Caco-2 (cell line): ENCODE measurements at regions of chr11 and their contacts with region 1.

Region 1: DNA sequence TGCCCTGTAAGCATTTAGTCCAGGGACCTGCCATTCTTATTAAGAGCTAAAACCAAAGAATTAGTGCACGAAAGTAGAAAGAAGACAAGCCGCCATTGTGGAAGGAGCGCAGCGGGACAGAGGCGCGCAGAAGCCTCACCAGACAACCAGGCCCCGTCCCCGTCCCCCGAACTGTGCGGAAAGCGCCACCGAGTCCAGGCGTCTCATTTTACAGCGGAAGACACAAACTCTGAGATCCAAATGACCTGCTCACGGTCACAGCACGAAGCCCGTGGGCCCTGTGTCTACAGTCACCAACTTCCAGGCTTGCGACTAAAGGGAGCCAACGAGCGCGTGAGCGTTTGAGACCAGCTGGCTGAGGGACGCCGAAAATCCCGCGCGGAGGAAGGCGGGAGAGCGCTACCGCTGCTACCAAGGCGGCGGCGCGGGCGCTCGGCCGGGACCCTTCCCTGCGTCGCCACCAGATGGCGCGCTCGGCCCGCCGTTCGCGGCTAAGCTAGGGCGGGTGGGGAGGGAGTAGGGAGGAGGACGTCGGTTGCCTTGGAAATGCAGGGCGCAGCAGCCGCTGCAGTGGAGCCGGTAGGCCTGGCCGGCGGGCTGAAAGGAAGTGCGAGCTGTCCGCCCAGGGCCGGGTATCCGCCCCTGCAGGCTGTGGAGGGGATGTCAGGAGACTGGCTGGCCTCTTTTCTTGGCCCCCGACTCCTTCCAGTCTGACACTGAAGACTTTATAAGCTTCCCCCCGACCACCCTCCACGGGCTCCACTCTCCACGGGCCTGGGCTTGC is 434 bp upstream of the CCDC83 start:
- DNase-seq: peak; percentile 97 to 99
- H3K4me3 ChIP-seq: peak overlapping the region; percentile 75
- H3K4me3 Mint-ChIP-seq: peak overlapping the region; percentile 83
- H3K27ac Mint-ChIP-seq: peak overlapping the region; percentile 87
- H3K4me1 ChIP-seq: peaks cover 5% of the 10 kb centered on the region
- H3K4me1 Mint-ChIP-seq: peaks cover 16% of the 10 kb centered on the region
- H3K27me3 ChIP-seq: no peaks in the 10 kb centered on the region
- H3K27me3 Mint-ChIP-seq: no peaks in the 10 kb centered on the region
- CTCF ChIP-seq: peak; percentile 95 to 98

Region 2: DNA sequence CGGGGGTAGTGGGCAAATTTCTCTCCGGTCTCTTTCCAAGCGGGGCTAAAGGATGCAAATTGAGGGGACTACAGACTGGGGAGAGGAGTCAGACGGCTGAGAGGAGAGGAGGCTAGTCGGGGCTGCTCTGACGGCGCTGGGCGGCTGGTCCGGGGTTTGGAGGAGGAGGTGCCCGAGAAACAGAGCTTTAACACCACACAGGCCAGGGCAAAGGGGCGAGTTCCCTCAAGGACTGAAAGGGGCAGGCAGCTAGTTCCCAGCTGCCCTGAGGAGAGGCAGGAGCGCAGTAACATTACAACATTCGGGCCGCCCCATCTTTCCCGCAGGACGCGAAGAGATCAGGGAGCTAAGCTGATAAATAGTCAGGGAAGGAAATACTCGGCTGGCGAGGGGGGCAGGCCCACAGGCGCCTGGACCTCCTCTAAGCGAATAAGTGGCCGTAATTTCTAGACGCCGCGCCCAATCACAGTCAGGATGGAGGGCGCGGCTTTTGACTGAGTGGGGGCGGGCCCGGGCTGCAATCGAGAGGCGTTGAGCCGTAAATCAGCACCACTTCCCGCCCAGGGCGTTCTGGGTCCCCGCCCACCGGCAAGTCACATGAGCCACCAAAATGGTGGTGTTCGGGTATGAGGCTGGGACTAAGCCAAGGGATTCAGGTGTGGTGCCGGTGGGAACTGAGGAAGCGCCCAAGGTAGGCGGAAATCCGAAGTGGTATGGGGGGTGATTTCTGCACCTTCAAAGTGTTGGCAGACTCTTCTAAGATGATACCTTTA is 226.6 kb before region 1 on chr11 and contains the start of gene TMEM126B:
- CTCF ChIA-PET with region 1: interaction called, 5 read pairs
- POLR2A ChIA-PET with region 1: interaction called, 3 read pairs
- intact Hi-C with region 1: loop called (anchors 2 kb)
- DNase-seq: peak; percentile 99 to 100
- H3K4me3 ChIP-seq: peak within 1 kb of the TSS; percentile 58
- H3K4me3 Mint-ChIP-seq: peak within 1 kb of the TSS; percentile 98
- H3K27ac Mint-ChIP-seq: peak within 1 kb of the TSS; percentile 96
- H3K4me1 ChIP-seq: peaks cover 8% of the 10 kb centered on the region; the same call in 1 of the 2 replicates
- H3K4me1 Mint-ChIP-seq: peaks cover 13% of the 10 kb centered on the region
- H3K27me3 ChIP-seq: no peaks in the 10 kb centered on the region
- H3K27me3 Mint-ChIP-seq: no peaks in the 10 kb centered on the region
- CTCF ChIP-seq: no peak
- total RNA-seq, gene TMEM126B: 141 and 144 TPM in 2 replicates

Region 3: DNA sequence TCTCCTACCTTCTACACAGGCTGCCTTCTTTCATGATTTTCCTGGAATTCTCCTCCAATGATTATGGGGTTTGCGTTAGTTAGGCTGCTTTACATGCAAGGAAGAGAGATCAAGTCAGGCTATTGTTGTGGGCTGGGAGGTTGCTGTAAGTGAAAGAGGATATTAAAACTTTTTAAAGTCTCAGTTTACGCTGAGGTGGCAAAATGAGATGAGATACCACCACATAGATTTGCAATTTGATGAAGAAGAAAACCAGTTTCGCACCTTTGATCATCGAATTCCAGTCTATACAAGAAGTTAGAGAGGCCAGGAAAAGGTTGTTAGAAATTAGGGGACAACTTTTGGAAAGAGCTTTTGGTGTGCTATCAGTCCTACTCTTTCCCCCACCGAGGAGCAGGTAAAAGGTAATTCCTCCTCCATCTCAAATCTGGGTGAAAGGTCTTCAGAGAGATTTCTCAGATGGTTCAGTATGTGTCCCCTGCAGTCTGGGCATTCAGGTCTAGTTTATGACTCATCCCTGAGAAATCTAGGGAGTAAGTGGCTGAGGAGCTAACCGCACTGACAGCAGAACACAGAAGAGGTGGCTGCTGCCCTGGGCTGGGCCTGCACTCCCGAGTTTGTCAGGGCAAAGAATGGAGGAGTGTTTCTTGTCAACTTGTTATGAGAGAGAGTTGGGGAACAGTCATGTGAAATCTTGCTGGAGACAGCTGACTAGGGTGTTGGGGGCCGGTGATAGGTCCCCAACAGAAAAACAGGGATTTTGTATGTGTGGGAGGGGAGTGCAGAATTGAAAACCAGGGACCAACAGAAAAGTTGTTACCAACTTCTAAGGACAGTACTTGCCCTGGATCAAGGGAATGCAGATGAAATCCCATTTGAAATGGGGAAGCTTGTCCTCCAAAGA is 35.2 kb after region 1 on chr11:
- CTCF ChIA-PET with region 1: no interaction called
- POLR2A ChIA-PET with region 1: no interaction called
- intact Hi-C with region 1: loop called (anchors 1 kb)
- DNase-seq: peak; percentile 60 to 73
- H3K4me3 ChIP-seq: no peak overlapping the region
- H3K4me3 Mint-ChIP-seq: peak overlapping the region; percentile 18
- H3K27ac Mint-ChIP-seq: peak overlapping the region; percentile 49
- H3K4me1 ChIP-seq: peaks cover 31% of the 10 kb centered on the region
- H3K4me1 Mint-ChIP-seq: peaks cover 28% of the 10 kb centered on the region
- H3K27me3 ChIP-seq: no peaks in the 10 kb centered on the region
- H3K27me3 Mint-ChIP-seq: no peaks in the 10 kb centered on the region
- CTCF ChIP-seq: no peak

Region 4: GRCh38 chr11:86003654-86004053 is 148.9 kb after region 1 on chr11:
- CTCF ChIA-PET with region 1: no interaction called
- POLR2A ChIA-PET with region 1: no interaction called
- intact Hi-C with region 1: loop called (anchors 10 kb)
- DNase-seq: no peak
- H3K4me3 ChIP-seq: no peak overlapping the region
- H3K4me3 Mint-ChIP-seq: no peak overlapping the region
- H3K27ac Mint-ChIP-seq: peak overlapping the region; percentile 22
- H3K4me1 ChIP-seq: peaks cover 26% of the 10 kb centered on the region
- H3K4me1 Mint-ChIP-seq: peaks cover 30% of the 10 kb centered on the region
- H3K27me3 ChIP-seq: no peaks in the 10 kb centered on the region
- H3K27me3 Mint-ChIP-seq: no peaks in the 10 kb centered on the region
- CTCF ChIP-seq: no peak

Region 5: GRCh38 chr11:86091566-86091965 is 236.8 kb after region 1 on chr11:
- CTCF ChIA-PET with region 1: no interaction called
- POLR2A ChIA-PET with region 1: no interaction called
- intact Hi-C with region 1: no loop called
- DNase-seq: no peak
- H3K4me3 ChIP-seq: no peak overlapping the region
- H3K4me3 Mint-ChIP-seq: no peak overlapping the region
- H3K27ac Mint-ChIP-seq: peak overlapping the region; percentile 1
- H3K4me1 ChIP-seq: peaks cover 17% of the 10 kb centered on the region
- H3K4me1 Mint-ChIP-seq: peaks cover 13% of the 10 kb centered on the region
- H3K27me3 ChIP-seq: no peaks in the 10 kb centered on the region
- H3K27me3 Mint-ChIP-seq: no peaks in the 10 kb centered on the region
- CTCF ChIP-seq: no peak

Region 6: GRCh38 chr11:86116386-86116726 is 261.6 kb after region 1 on chr11:
- CTCF ChIA-PET with region 1: no interaction called
- POLR2A ChIA-PET with region 1: no interaction called
- intact Hi-C with region 1: no loop called
- DNase-seq: no peak
- H3K4me3 ChIP-seq: no peak overlapping the region
- H3K4me3 Mint-ChIP-seq: no peak overlapping the region
- H3K27ac Mint-ChIP-seq: no peak overlapping the region
- H3K4me1 ChIP-seq: peaks cover 62% of the 10 kb centered on the region
- H3K4me1 Mint-ChIP-seq: peaks cover 34% of the 10 kb centered on the region
- H3K27me3 ChIP-seq: no peaks in the 10 kb centered on the region
- H3K27me3 Mint-ChIP-seq: no peaks in the 10 kb centered on the region
- CTCF ChIP-seq: no peak

Region 7: DNA sequence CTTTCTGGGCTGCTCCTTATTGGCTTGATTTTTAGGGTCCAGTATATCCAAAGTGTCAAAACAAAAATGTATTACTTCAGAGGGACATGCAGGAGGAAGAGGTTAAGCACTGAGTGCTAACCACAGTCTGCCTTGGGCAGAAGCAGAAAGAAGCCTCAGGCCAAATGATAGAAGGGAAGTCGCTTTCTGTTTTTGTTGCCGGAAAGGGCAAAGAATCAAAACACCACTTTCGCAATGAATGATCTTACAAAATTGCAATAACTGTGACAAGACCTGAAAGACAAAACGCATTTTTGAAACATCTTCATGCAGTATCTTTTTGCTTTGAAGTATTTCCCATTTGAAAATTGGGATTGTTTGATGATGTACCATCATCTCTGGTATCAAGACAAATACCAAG is 284.2 kb after region 1 on chr11:
- CTCF ChIA-PET with region 1: no interaction called
- POLR2A ChIA-PET with region 1: no interaction called
- intact Hi-C with region 1: loop called (anchors 10 kb)
- DNase-seq: no peak
- H3K4me3 ChIP-seq: no peak overlapping the region
- H3K4me3 Mint-ChIP-seq: no peak overlapping the region
- H3K27ac Mint-ChIP-seq: no peak overlapping the region
- H3K4me1 ChIP-seq: peaks cover 42% of the 10 kb centered on the region
- H3K4me1 Mint-ChIP-seq: peaks cover 18% of the 10 kb centered on the region
- H3K27me3 ChIP-seq: no peaks in the 10 kb centered on the region
- H3K27me3 Mint-ChIP-seq: no peaks in the 10 kb centered on the region
- CTCF ChIP-seq: no peak

Region 8: DNA sequence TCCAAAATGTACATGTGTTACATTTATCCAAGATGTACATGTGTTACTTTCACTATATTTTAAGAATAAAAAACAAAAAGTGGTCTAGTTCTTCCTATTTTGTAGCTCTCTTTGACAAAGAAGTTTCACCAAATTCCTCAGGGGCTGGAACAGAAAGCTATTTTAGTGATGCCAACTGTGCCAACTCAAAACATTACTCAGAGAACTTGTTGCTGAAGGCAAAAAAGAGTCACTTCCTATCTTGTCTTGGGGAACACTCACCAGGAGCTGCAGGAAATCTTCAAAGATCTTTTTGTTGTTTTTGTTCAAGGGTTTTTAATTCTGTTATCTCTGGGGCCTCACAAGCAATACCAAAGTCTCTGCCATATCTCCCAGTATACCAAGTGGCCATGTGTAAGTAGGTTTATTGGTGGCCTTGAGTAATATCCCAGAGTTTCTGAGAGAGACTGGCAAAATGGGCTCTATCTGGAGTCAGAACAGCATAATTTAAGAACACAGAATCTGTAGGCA is 376.2 kb after region 1 on chr11:
- CTCF ChIA-PET with region 1: interaction called, 13 read pairs
- POLR2A ChIA-PET with region 1: no interaction called
- intact Hi-C with region 1: no loop called
- DNase-seq: no peak
- H3K4me3 ChIP-seq: no peak overlapping the region
- H3K4me3 Mint-ChIP-seq: no peak overlapping the region
- H3K27ac Mint-ChIP-seq: no peak overlapping the region
- H3K4me1 ChIP-seq: peaks cover 13% of the 10 kb centered on the region
- H3K4me1 Mint-ChIP-seq: peaks cover 24% of the 10 kb centered on the region
- H3K27me3 ChIP-seq: no peaks in the 10 kb centered on the region
- H3K27me3 Mint-ChIP-seq: no peaks in the 10 kb centered on the region
- CTCF ChIP-seq: no peak

Region 9: DNA sequence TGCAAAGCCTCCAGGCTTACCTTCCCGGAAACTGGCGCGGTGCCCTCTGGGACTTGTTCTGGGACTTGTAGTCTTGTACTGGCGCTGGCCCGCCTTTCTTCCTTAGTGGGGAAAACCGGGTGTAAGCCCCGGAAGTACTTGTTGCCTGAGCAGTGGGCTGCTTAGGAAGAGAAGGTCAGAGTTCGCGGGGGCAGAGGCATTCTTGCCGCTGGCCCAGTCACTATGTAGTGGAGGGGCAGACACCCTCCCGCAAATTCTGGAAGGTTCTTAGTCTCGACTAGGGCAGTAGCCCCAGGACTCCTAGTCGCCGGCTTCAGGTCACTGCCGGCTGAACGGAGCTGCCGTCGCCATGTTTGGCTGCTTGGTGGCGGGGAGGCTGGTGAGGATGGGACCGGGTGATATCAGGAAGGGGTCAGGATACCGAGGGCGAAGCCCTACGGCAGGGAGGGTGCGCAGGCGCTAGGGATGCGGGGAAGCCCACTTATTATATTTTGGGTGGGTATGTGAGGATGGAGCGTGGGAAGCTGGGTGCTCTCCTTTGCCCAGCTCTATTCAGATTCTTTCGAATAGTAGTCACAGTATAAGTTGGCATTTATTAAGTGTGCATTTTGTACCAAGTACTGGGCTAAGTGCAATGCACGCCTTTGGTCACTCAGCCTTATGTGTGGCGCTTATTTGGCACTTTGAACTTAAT is 447.5 kb after region 1 on chr11 and contains the start of gene HIKESHI:
- CTCF ChIA-PET with region 1: interaction called, 5 read pairs
- POLR2A ChIA-PET with region 1: no interaction called
- intact Hi-C with region 1: loop called (anchors 2 kb)
- DNase-seq: peak; percentile 98 to 99
- H3K4me3 ChIP-seq: peak within 1 kb of the TSS; percentile 58
- H3K4me3 Mint-ChIP-seq: peak within 1 kb of the TSS; percentile 98
- H3K27ac Mint-ChIP-seq: peak within 1 kb of the TSS; percentile 99
- H3K4me1 ChIP-seq: 0 out of 2 replicates have a peak, but pooled peaks cover 10% of the 10 kb centered on the region
- H3K4me1 Mint-ChIP-seq: peaks cover 8% of the 10 kb centered on the region
- H3K27me3 ChIP-seq: no peaks in the 10 kb centered on the region
- H3K27me3 Mint-ChIP-seq: no peaks in the 10 kb centered on the region
- CTCF ChIP-seq: no peak
- total RNA-seq, gene HIKESHI: 81.3 and 82.0 TPM in 2 replicates